GM13977 (cell line): ENCODE measurements at regions of chr11 and their contacts with region 1.

Region 1: DNA sequence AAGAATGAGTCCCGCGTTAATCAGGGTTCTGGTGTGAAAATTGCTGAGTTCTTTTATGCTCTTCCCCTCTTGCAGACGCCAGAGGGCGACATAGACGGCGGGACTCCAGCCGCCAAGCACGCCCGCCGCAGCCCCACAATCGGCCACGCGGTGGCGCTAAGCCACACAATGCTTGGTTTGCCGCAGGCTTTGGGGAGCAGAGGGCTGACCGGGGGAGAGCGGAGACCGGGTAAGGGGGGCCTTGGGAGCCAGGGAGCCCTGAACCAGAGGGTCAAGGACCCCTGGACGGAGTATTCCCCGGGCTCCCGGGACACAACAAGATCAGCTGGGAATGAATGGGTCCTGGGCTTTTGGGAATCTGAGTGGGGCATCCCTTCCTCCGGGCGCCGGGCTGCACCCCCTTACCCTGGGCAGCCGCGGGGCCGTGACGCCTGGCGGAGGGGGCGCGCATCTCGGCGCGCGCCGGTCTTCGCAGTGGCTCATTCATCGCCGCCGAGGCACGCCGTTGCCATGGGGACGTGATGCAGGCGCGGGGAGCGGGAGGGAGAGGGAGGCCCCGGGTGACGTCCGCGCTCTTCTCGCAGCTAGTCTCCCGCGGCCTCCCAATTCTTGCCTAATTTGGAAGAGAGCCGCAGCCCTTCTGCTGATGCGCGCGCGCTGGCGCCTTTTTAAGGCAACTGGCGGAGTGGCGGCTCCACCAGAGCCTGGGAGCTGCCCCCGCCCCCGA is 12.2 kb upstream of the NPAS4 start:
- DNase-seq: peak; percentile 97
- CTCF ChIP-seq: peak; percentile 100

Region 2: DNA sequence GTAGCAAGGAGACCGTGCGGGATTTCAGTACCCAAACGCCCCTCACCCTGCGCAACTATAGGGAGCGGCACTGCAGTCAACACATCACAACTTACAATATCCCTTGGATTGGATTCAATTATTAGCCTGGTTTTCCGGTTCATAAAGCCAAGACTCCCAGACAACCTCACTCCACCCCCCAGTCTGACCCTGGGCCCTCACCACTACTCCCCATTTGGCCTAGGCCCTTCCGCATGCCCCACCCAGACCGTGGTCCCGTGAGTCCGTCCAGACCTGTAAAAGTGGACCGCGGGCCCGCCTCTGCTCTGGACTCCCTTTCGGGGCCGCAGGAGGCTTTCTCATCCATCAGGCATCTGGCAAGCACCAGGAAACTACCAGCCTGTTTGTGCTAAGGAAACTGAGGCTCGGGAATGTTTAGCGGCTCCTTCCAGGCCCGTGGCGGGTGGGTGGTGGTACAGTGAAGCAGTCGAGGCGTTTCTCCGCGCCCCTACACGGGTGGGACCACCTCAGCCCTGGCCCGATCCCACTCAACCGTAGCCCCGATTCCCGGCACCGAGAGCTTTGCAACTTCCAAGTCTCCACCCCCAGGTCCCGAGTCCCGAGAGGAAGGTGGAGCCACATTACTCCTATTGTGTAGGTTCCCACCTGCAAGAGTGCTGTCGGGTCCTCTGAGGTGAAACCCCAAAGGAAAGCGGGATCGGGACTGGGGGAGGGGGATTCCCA is 70.9 kb after region 1 on chr11:
- in situ Hi-C with region 1: loop called (anchors 10 kb)
- DNase-seq: no peak
- CTCF ChIP-seq: no peak

Region 3: DNA sequence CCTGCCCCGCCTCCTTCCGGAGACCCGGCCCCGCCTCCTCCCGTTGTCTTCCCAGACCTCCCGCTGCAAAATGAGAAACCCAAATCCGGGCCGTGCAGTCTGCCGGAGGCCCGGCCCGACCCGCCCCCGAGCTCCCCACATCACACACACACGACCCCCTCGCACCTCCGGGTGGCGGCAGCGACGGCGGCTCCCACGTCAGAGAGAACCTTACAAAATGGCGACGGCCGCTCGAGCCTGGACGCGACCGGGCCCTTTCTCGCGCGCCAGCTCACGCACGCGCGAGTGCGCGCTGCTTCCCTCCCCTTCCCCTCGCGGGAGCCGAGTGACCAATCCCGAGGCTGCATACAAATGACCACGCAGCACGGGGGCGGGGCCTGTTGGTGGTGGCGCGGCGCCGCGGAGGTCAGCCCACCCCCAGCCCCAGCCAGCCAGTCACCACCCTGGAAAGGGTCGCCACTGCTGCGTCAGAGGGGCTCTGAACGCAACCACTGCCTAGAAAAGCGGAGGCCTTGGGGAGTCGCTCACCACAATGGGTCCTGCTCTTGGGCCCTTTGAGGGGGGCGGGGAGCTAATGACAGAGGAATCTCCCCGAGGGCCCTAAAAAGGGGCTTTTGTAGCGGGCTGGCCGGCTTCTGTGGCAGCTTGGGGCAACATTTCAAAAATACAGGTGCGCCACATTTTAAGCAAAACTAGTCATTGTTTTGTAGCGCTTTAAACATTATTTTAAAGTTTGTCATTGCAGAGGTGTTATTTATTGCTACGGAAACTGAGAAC is 269.1 kb after region 1 on chr11 and contains the start of gene RBM4B:
- in situ Hi-C with region 1: loop called (anchors 25 kb)
- DNase-seq: peak; percentile 97
- CTCF ChIP-seq: no peak